ENCODE measurements at regions of chr17 and their contacts with region 1.

Region 1: GRCh38 chr17:16232391-16232790 is 15.4 kb downstream of the PIGL start:
- DNase-seq: no peak
- H3K4me3 ChIP-seq: no peak overlapping the region
- H3K27ac ChIP-seq: no peak overlapping the region
- H3K4me1 ChIP-seq: peaks cover 4% of the 10 kb centered on the region
- H3K27me3 ChIP-seq: no peaks in the 10 kb centered on the region
- CTCF ChIP-seq: no peak
- POLR2A ChIP-seq: no peak

Region 2: GRCh38 chr17:16255481-16255921 is 23.1 kb after region 1 on chr17:
- CTCF ChIA-PET with region 1: no interaction called
- POLR2A ChIA-PET with region 1: interaction called, 11 read pairs
- dilution Hi-C with region 1: no loop called
- intact Hi-C with region 1: no loop called
- DNase-seq: peak; percentile 55
- H3K4me3 ChIP-seq: no peak overlapping the region
- H3K27ac ChIP-seq: no peak overlapping the region
- H3K4me1 ChIP-seq: peaks cover 5% of the 10 kb centered on the region
- H3K27me3 ChIP-seq: no peaks in the 10 kb centered on the region
- CTCF ChIP-seq: no peak
- POLR2A ChIP-seq: no peak